Sigmoid colon (tissue), 7 donors: ENCODE measurements at regions of chr12 and their contacts with region 1.

Region 1: GRCh38 chr12:92570056-92570753 is 132.6 kb upstream of the PLEKHG7 start:
- DNase-seq: peak; percentile 75
- H3K4me3 ChIP-seq: no peak overlapping the region
- H3K27ac ChIP-seq: peak overlapping the region in 1 of 4 donors; percentile 11
- H3K4me1 ChIP-seq: peaks cover 0 to 8% (median 0%) of the 10 kb centered on the region in 4 donors
- H3K27me3 ChIP-seq: no peaks in the 10 kb centered on the region
- CTCF ChIP-seq: peak; percentile 58 to 88 (median 80)
- EP300 ChIP-seq: no peak
- POLR2A ChIP-seq: no peak

Region 2: GRCh38 chr12:91361864-91362263 is 1208.3 kb before region 1 on chr12:
- intact Hi-C with region 1: loop called (anchors 5 kb)
- DNase-seq: no peak
- H3K4me3 ChIP-seq: no peak overlapping the region
- H3K27ac ChIP-seq: no peak overlapping the region
- H3K4me1 ChIP-seq: peaks cover 0 to 3% (median 0%) of the 10 kb centered on the region in 4 donors
- H3K27me3 ChIP-seq: no peaks in the 10 kb centered on the region
- CTCF ChIP-seq: peak; percentile 37 to 61 (median 52)
- EP300 ChIP-seq: no peak
- POLR2A ChIP-seq: no peak

Region 3: DNA sequence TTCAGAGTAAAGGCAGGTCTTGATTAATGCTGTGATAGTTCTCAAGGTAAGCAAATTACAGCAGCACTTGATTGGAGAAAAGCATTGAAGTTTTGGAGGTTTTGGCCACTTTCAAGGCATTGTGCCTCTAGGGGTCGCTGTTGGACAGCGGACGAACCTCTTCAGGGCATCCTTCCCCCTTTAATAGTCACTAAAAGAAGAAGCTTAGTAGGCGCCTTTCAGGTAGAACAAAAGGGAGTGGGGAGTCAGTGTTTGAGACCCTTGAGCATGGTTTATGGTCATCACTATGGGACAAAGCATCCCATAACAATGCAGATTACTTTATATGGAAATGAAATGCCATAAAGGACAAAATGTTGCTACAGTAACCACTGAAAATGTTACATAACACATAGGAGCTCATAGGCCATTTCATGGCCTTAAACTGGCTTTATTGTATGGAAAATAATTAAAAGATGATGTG is 1188.1 kb before region 1 on chr12:
- intact Hi-C with region 1: loop called (anchors 1 kb)
- DNase-seq: peak; percentile 88
- H3K4me3 ChIP-seq: peak overlapping the region; percentile 38 to 50 (median 44)
- H3K27ac ChIP-seq: peak overlapping the region; percentile 49 to 78 (median 62)
- H3K4me1 ChIP-seq: peaks cover 0 to 12% (median 8%) of the 10 kb centered on the region in 4 donors
- H3K27me3 ChIP-seq: no peaks in the 10 kb centered on the region
- CTCF ChIP-seq: peak; percentile 53 to 90 (median 78)
- EP300 ChIP-seq: no peak
- POLR2A ChIP-seq: no peak

Region 4: DNA sequence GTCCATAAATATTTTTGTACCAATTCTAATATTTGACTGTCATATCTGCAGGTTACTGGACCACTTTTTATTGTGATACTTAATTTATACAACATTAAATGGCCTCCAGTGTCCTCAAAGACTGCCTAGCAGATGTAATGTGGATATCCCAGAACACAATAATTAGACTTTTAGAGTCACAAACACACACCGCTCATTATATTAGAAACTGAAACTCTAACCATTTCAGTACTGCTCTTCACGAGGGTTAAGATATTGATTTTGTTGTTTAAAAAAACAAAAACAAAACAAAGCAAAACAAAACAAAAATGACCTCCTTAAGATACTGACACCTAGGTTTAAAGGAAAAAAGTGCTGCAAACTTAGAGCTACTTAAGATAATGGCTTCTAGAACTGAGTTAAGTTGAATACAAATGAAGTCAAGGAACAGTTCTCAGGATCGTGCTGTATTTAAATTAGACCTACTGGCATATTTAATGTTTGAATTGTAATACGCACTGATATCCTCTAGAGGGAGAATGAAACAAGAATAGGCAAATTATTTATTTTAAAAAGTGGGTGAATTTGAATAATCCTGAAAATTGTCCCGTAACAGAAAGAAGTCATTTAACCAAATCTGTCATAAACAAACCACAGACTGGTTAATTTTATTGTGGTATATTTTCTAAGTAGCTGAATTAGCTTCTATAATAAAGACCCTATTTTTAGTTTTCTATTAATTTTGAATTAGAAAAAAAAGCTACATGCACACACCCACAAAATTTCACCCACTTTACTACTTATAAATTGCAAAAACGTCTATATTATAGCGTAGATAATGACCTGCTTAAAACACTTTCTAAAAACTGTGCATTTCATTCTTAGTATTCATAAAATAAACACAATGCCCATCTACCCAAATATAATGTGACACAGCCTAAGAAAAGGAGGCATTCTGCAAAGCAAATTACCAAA is 992.3 kb before region 1 on chr12:
- intact Hi-C with region 1: loop called (anchors 2 kb)
- DNase-seq: no peak
- H3K4me3 ChIP-seq: peak overlapping the region in 1 of 4 donors; percentile 8
- H3K27ac ChIP-seq: peak overlapping the region in 1 of 4 donors; percentile 19
- H3K4me1 ChIP-seq: peaks cover 0 to 12% (median 12%) of the 10 kb centered on the region in 4 donors
- H3K27me3 ChIP-seq: no peaks in the 10 kb centered on the region
- CTCF ChIP-seq: peak in 2 of 4 experiments; percentile 42 to 58
- EP300 ChIP-seq: no peak
- POLR2A ChIP-seq: no peak

Region 5: GRCh38 chr12:91811481-91812287 is 758.5 kb before region 1 on chr12:
- intact Hi-C with region 1: loop called (anchors 2 kb)
- DNase-seq: peak; percentile 80
- H3K4me3 ChIP-seq: no peak overlapping the region
- H3K27ac ChIP-seq: no peak overlapping the region
- H3K4me1 ChIP-seq: no peaks in the 10 kb centered on the region
- H3K27me3 ChIP-seq: no peaks in the 10 kb centered on the region
- CTCF ChIP-seq: peak; percentile 64 to 93 (median 80)
- EP300 ChIP-seq: no peak
- POLR2A ChIP-seq: no peak

Region 6: GRCh38 chr12:92244036-92244435 is 326.2 kb before region 1 on chr12:
- intact Hi-C with region 1: loop called (anchors 5 kb)
- DNase-seq: peak; percentile 73
- H3K4me3 ChIP-seq: no peak overlapping the region
- H3K27ac ChIP-seq: peak overlapping the region; percentile 48 to 79 (median 66)
- H3K4me1 ChIP-seq: peaks cover 0 to 25% (median 24%) of the 10 kb centered on the region in 4 donors
- H3K27me3 ChIP-seq: no peaks in the 10 kb centered on the region
- CTCF ChIP-seq: peak in 2 of 4 experiments; percentile 12 to 31
- EP300 ChIP-seq: peak; percentile 72 to 94 (median 84)
- POLR2A ChIP-seq: no peak